H1 (cell line): ENCODE measurements at regions of chr12 and their contacts with region 1.

Region 1: DNA sequence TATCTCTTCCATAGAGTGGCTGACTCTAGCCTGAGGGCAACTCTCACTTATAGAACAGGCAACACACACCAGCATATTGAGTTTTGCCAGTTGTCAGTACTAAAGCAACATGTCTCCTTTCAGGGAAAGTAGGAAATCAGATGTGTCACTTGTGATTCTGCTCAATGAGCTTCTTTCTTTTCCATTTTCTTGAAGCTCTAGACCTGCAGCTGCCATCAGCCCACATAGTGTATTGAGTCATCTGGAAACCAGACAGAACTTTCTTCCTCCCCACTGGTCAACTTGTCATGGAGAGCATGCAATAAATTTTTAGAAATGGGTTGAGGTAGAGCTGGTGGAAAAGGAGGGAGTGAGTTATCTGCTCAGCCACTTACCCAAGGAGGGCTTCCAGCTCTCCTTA is 209.0 kb upstream of the PLEKHG7 start:
- DNase-seq: no peak
- H3K4me3 ChIP-seq: no peak overlapping the region
- H3K27ac ChIP-seq: no peak overlapping the region
- H3K4me1 ChIP-seq: peaks cover 0 to 3% (median 0%) of the 10 kb centered on the region in 4 experiments; a peak in 1 of 7 replicates
- H3K27me3 ChIP-seq: no peaks in the 10 kb centered on the region
- CTCF ChIP-seq: no peak
- EP300 ChIP-seq: no peak
- POLR2A ChIP-seq: no peak
- RAD21 ChIP-seq: no peak

Region 2: GRCh38 chr12:92505254-92506231 is 11.7 kb after region 1 on chr12:
- CTCF ChIA-PET with region 1: interaction called, 17 read pairs
- POLR2A ChIA-PET with region 1: no interaction called
- DNase-seq: no peak
- H3K4me3 ChIP-seq: no peak overlapping the region
- H3K27ac ChIP-seq: no peak overlapping the region
- H3K4me1 ChIP-seq: peaks cover 0 to 3% (median under 1%) of the 10 kb centered on the region in 4 experiments; a peak in 1 of 7 replicates
- H3K27me3 ChIP-seq: no peaks in the 10 kb centered on the region
- CTCF ChIP-seq: no peak
- EP300 ChIP-seq: no peak
- POLR2A ChIP-seq: no peak
- RAD21 ChIP-seq: no peak